Natural killer cell (primary cell): ENCODE measurements at regions of chr1 and their contacts with region 1.

Region 1: DNA sequence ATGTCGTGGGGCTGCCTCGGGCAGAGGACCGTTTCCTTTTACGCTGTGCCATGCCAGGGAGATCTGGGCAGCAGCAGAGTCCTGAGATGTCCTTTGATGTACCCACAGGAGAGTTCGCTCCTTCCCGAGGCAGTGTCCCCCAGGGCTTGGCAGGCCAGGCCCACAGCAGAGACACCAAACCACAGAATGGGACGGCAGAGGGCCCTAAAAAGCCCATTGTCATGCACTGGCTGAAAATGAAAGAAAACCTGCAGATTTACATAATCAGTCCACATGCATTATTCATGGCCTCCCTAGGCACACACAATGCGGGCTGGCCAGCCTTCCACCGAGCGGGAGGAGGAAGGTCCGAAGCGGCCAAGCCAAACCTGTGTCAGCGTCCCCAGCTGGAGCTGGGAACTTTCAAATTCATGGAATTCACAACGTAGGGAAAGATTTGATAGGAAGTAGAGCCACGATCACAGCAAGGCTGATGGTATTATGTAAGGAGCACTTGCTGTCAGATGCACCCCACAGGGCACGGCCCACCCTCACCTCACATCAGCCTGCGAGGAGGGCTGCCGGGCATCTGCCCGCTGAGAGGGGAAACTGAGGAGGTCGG is 25.3 kb upstream of the EFHD2 start:
- DNase-seq: peak; percentile 20 to 29
- ATAC-seq: peak; percentile 67 to 75 (median 72)
- H3K4me3 ChIP-seq: peak overlapping the region; percentile 36
- H3K4me3 Mint-ChIP-seq: peak overlapping the region; percentile 93
- H3K27ac ChIP-seq: peak overlapping the region; percentile 63
- H3K27ac Mint-ChIP-seq: peak overlapping the region; percentile 87 to 88
- H3K4me1 ChIP-seq: peaks cover 38% of the 10 kb centered on the region
- H3K4me1 Mint-ChIP-seq: peaks cover 34 to 55% of the 10 kb centered on the region in 2 donors
- H3K27me3 ChIP-seq: no peaks in the 10 kb centered on the region
- H3K27me3 Mint-ChIP-seq: no peaks in the 10 kb centered on the region
- CTCF ChIP-seq: no peak

Region 2: DNA sequence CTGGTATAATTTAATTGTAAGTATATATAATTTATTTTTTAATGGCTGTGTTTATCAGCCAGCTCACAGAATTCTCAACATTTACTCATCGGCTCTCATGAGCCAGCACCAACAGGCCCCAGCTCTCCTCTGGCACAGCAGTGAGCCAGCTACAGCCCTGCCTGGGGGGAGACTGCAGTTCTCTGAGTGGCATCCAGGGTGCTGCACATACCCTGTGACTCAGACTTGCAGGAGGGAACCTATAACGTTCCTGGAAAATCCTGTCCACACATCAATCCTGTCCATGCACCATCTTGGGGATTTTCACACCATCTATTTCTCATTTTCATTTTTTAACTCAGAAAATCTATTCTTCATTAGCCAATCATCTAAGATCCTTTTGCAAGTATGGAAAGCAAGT is 100.9 kb before region 1 on chr1:
- intact Hi-C with region 1: no loop called
- DNase-seq: no peak
- ATAC-seq: no peak
- H3K4me3 ChIP-seq: no peak overlapping the region
- H3K4me3 Mint-ChIP-seq: no peak overlapping the region
- H3K27ac ChIP-seq: no peak overlapping the region
- H3K27ac Mint-ChIP-seq: no peak overlapping the region
- H3K4me1 ChIP-seq: no peaks in the 10 kb centered on the region
- H3K4me1 Mint-ChIP-seq: no peaks in the 10 kb centered on the region
- H3K27me3 ChIP-seq: no peaks in the 10 kb centered on the region
- H3K27me3 Mint-ChIP-seq: peaks cover 2 to 14% of the 10 kb centered on the region in 2 donors
- CTCF ChIP-seq: no peak

Region 3: DNA sequence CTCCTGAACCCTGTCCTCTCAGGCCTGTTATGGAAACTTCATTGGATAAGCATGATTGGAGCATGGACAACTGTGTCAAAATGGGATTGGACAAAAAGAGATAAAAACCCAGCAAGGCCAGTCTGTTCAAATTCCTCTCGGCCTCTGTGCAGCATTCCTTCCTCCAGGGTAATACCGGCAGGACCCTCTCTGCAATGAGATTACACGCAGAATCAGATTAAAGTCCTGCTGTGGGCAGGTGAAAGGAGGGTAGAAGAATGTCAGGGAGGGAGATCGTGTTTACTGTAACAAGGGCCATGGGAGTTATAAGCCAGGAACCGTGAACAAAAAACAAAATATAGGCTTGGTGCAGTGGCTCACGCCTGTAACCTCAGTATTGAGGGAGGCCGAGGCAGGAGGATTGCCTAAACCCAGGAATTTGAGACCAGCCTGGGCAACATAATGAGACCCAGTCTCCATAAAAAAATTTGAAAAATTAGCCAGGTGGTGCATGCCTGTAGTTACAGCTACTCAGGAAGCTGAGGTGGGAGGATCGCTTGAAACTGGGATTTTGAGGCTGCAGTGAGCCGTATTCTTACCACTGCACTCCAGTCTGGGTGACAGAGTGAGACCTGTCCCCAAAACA is 19.7 kb after region 1 on chr1:
- intact Hi-C with region 1: loop called (anchors 2 kb)
- DNase-seq: no peak
- ATAC-seq: no peak
- H3K4me3 ChIP-seq: peak overlapping the region; percentile 27
- H3K4me3 Mint-ChIP-seq: peak overlapping the region; percentile 95
- H3K27ac ChIP-seq: peak overlapping the region; percentile 73
- H3K27ac Mint-ChIP-seq: peak overlapping the region; percentile 93 to 100
- H3K4me1 ChIP-seq: peaks cover 82% of the 10 kb centered on the region
- H3K4me1 Mint-ChIP-seq: peaks cover 81 to 92% of the 10 kb centered on the region in 2 donors
- H3K27me3 ChIP-seq: no peaks in the 10 kb centered on the region
- H3K27me3 Mint-ChIP-seq: no peaks in the 10 kb centered on the region
- CTCF ChIP-seq: no peak